Common myeloid progenitor, CD34-positive (primary cell): ENCODE measurements at regions of chr18 and their contacts with region 1.

Region 1: DNA sequence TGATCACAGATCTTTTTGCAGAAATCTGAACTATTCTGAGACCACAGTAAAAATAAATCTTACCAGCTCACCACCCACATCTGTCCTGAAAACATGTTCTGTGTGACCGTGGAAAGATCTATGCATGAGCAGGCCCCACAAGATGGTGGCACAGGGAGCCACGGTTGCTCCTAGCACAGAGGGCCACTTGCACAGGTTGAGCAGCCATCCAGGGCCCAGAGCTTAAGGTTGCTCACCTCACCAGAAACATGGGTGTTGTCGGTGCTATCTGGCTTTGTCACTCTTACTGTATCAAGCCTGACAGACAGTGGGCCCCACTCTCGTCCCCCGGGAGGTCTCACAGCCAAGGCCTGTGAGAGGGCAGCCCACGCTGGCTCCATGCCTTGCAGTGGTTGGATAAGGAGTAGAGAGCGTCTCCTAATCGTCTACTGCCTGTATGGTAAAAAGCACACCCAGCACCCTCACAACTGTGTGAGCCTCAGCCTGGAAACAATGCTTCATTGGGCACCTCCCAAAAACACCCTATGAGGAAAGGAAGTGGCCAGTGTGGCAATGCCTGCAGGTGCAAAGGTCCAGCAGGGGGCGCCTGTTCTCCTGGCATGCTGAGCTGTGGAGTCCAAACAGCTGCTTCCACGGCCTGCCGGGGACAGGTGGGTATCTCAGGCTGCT is 19.6 kb downstream of the TUBB6 start:
- DNase-seq: peak; percentile 63 to 81 (median 76)
- H3K4me3 ChIP-seq: no peak overlapping the region
- H3K27ac ChIP-seq: no peak overlapping the region
- H3K4me1 ChIP-seq: peaks cover 0 to 4% (median 0%) of the 10 kb centered on the region in 4 experiments
- H3K27me3 ChIP-seq: no peaks in the 10 kb centered on the region

Region 2: GRCh38 chr18:12278741-12279682 is 48.6 kb before region 1 on chr18:
- CTCF ChIA-PET with region 1: interaction called, 11 read pairs
- POLR2A ChIA-PET with region 1: no interaction called
- DNase-seq: no peak
- H3K4me3 ChIP-seq: peak overlapping the region in 2 of 7 experiments; percentile 10 to 13
- H3K27ac ChIP-seq: no peak overlapping the region
- H3K4me1 ChIP-seq: peaks cover 0 to 16% (median 4%) of the 10 kb centered on the region in 4 experiments
- H3K27me3 ChIP-seq: peaks cover 0 to 8% (median 0%) of the 10 kb centered on the region in 5 experiments

Region 3: GRCh38 chr18:12287684-12288402 is 39.8 kb before region 1 on chr18:
- CTCF ChIA-PET with region 1: interaction called, 14 read pairs
- POLR2A ChIA-PET with region 1: no interaction called
- DNase-seq: peak in 2 of 3 donors; percentile 21 to 44
- H3K4me3 ChIP-seq: peak overlapping the region in 6 of 7 experiments; percentile 29 to 69 (median 50)
- H3K27ac ChIP-seq: no peak overlapping the region
- H3K4me1 ChIP-seq: peaks cover 0 to 20% (median 14%) of the 10 kb centered on the region in 4 experiments
- H3K27me3 ChIP-seq: peaks cover 6 to 48% (median 23%) of the 10 kb centered on the region in 5 experiments

Region 4: GRCh38 chr18:12309683-12310198 is 17.9 kb before region 1 on chr18:
- CTCF ChIA-PET with region 1: interaction called, 70 read pairs
- POLR2A ChIA-PET with region 1: no interaction called
- DNase-seq: no peak
- H3K4me3 ChIP-seq: no peak overlapping the region
- H3K27ac ChIP-seq: no peak overlapping the region
- H3K4me1 ChIP-seq: peaks cover 0 to 42% (median 27%) of the 10 kb centered on the region in 4 experiments
- H3K27me3 ChIP-seq: peaks cover 0 to 56% (median 19%) of the 10 kb centered on the region in 5 experiments

Region 5: DNA sequence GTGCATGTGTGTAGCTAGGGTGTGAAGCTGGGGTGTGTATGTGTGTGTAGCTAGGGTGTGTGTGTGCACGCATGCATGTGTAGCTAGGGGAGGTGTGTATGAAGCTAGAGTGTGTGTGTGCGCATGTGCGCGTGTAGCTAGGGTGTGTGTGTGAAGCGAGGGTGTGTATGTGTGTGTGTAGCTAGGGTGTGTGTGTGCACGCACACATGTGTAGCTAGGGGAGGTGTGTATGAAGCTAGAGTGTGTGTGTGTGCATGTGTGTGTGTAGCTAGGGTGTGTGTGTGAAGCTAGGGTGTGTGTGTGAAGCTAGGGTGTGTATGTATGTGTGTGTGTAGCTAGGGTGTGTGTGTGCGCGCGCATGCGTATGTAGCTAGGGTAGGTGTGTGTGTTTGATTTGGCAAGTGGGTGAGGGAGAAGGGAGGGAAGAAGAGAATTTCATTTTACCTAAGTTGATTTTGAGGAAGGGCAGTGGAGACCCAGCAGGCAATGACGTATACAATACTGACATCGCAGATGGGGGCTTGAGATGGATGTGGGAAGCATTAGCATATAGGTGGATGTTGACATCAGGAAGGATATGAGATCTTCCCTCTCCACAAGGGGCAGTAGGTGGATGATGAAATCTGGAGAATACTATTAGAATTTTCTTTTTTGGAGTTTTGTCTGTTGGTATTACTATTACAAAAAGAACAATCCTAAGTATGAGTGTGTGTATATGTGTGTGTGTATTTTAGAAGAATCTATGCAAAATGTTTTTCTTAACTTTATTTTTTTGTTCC is 150.8 kb after region 1 on chr18:
- CTCF ChIA-PET with region 1: no interaction called
- POLR2A ChIA-PET with region 1: no interaction called
- DNase-seq: no peak
- H3K4me3 ChIP-seq: no peak overlapping the region
- H3K27ac ChIP-seq: no peak overlapping the region
- H3K4me1 ChIP-seq: peaks cover 0 to 2% (median 0%) of the 10 kb centered on the region in 4 experiments
- H3K27me3 ChIP-seq: no peaks in the 10 kb centered on the region